Breast epithelium (tissue), 4 donors: ENCODE measurements at regions of chr7 and their contacts with region 1.

Region 1: GRCh38 chr7:53383131-53383530 is 347.7 kb downstream of the POM121L12 start:
- DNase-seq: no peak
- H3K4me3 ChIP-seq: no peak overlapping the region
- H3K27ac ChIP-seq: no peak overlapping the region
- H3K4me1 ChIP-seq: no peaks in the 10 kb centered on the region
- H3K27me3 ChIP-seq: no peaks in the 10 kb centered on the region
- CTCF ChIP-seq: no peak
- POLR2A ChIP-seq: no peak

Region 2: DNA sequence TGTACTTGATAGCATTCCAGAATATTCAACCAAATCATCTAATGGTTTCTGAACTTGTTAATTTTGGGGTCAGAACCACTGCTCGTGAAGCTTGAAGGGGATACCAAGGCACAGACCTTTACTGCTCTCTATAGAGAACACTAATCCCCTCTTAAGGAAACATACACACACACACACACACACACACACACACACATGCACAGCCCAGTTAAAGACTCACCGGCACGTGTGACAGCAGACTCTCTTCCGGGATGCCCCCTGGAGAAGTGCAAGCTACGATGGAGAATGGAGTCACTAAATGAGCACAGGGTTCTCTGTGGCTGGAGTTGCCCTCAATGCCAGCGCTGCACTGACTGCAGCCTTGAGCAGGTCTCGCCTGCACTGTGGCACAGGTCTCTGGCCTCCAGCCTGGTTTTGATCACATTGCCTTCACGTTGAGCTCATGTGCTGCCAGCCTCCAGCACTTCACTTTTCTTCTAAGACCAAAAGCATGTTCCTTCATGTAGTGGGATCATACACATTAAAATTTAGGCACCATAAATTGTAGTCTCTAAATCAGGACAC is 46.9 kb before region 1 on chr7:
- intact Hi-C with region 1: no loop called
- DNase-seq: no peak
- H3K4me3 ChIP-seq: no peak overlapping the region
- H3K27ac ChIP-seq: no peak overlapping the region
- H3K4me1 ChIP-seq: no peaks in the 10 kb centered on the region
- H3K27me3 ChIP-seq: no peaks in the 10 kb centered on the region
- CTCF ChIP-seq: no peak
- POLR2A ChIP-seq: no peak

Region 3: GRCh38 chr7:54215424-54215823 is 832.3 kb after region 1 on chr7:
- intact Hi-C with region 1: loop called (anchors 10 kb)
- DNase-seq: no peak
- H3K4me3 ChIP-seq: no peak overlapping the region
- H3K27ac ChIP-seq: no peak overlapping the region
- H3K4me1 ChIP-seq: no peaks in the 10 kb centered on the region
- H3K27me3 ChIP-seq: no peaks in the 10 kb centered on the region
- CTCF ChIP-seq: no peak
- POLR2A ChIP-seq: no peak